Right ventricle myocardium inferior (tissue), 1 donor: ENCODE measurements at regions of chr11 and their contacts with region 1.

Region 1: GRCh38 chr11:3123761-3124733 is 41.1 kb downstream of the OSBPL5 start:
- DNase-seq: peak; percentile 81
- ATAC-seq: peak; percentile 79

Region 2: GRCh38 chr11:3160252-3161031 is 36.4 kb after region 1 on chr11:
- intact Hi-C with region 1: loop called (anchors 2 kb)
- DNase-seq: peak; percentile 93
- ATAC-seq: peak; percentile 83